CD4-positive, alpha-beta T cell (primary cell): ENCODE measurements at regions of chr9 and their contacts with region 1.

Region 1: DNA sequence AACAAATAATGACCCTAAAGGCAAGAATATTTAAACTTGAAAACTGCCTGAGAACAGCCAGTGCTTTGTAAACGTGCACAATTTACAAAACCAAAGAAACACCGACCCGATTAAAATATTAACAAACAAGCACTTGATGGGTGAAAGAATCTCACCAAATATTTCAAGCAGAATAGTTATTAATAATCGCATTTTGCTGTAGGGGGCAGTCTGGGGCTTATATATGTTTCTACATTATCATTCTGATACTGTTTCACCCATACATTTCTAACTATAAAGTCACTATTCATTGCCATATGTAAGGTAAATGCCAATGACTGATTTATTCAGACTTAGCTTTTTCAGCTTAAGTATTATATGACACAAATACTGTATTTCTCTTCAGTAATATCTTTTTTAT is 37.7 kb downstream of the UBAP2 start:
- DNase-seq: peak in 4 of 14 experiments; percentile 15 to 43 (median 40)
- ATAC-seq: peak; percentile 48
- H3K4me3 ChIP-seq: no peak overlapping the region
- H3K4me3 Mint-ChIP-seq: no peak overlapping the region
- H3K27ac ChIP-seq: no peak overlapping the region
- H3K27ac Mint-ChIP-seq: no peak overlapping the region
- H3K4me1 ChIP-seq: no peaks in the 10 kb centered on the region
- H3K4me1 Mint-ChIP-seq: no peaks in the 10 kb centered on the region
- H3K27me3 ChIP-seq: no peaks in the 10 kb centered on the region
- H3K27me3 Mint-ChIP-seq: no peaks in the 10 kb centered on the region
- CTCF ChIP-seq: peak; percentile 46

Region 2: GRCh38 chr9:33893861-33894260 is 117.1 kb before region 1 on chr9:
- CTCF ChIA-PET with region 1: no interaction called
- POLR2A ChIA-PET with region 1: no interaction called
- intact Hi-C with region 1: no loop called
- DNase-seq: no peak
- ATAC-seq: no peak
- H3K4me3 ChIP-seq: no peak overlapping the region
- H3K4me3 Mint-ChIP-seq: no peak overlapping the region
- H3K27ac ChIP-seq: no peak overlapping the region
- H3K27ac Mint-ChIP-seq: no peak overlapping the region
- H3K4me1 ChIP-seq: no peaks in the 10 kb centered on the region
- H3K4me1 Mint-ChIP-seq: peaks cover 7% of the 10 kb centered on the region
- H3K27me3 ChIP-seq: no peaks in the 10 kb centered on the region
- H3K27me3 Mint-ChIP-seq: no peaks in the 10 kb centered on the region
- CTCF ChIP-seq: no peak

Region 3: GRCh38 chr9:34072868-34073590 is 62.0 kb after region 1 on chr9:
- CTCF ChIA-PET with region 1: interaction called, 3 read pairs
- POLR2A ChIA-PET with region 1: no interaction called
- intact Hi-C with region 1: loop called (anchors 5 to 10 kb)
- DNase-seq: no peak
- ATAC-seq: no peak
- H3K4me3 ChIP-seq: no peak overlapping the region
- H3K4me3 Mint-ChIP-seq: no peak overlapping the region
- H3K27ac ChIP-seq: no peak overlapping the region
- H3K27ac Mint-ChIP-seq: no peak overlapping the region
- H3K4me1 ChIP-seq: peaks cover 3% of the 10 kb centered on the region
- H3K4me1 Mint-ChIP-seq: no peaks in the 10 kb centered on the region
- H3K27me3 ChIP-seq: no peaks in the 10 kb centered on the region
- H3K27me3 Mint-ChIP-seq: no peaks in the 10 kb centered on the region
- CTCF ChIP-seq: no peak

Region 4: GRCh38 chr9:34158362-34158869 is 147.4 kb after region 1 on chr9:
- CTCF ChIA-PET with region 1: no interaction called
- POLR2A ChIA-PET with region 1: no interaction called
- intact Hi-C with region 1: loop called in 1 of 2 experiments (anchors 5 kb)
- DNase-seq: no peak
- ATAC-seq: no peak
- H3K4me3 ChIP-seq: no peak overlapping the region
- H3K4me3 Mint-ChIP-seq: no peak overlapping the region
- H3K27ac ChIP-seq: no peak overlapping the region
- H3K27ac Mint-ChIP-seq: no peak overlapping the region
- H3K4me1 ChIP-seq: no peaks in the 10 kb centered on the region
- H3K4me1 Mint-ChIP-seq: no peaks in the 10 kb centered on the region
- H3K27me3 ChIP-seq: no peaks in the 10 kb centered on the region
- H3K27me3 Mint-ChIP-seq: no peaks in the 10 kb centered on the region
- CTCF ChIP-seq: no peak

Region 5: GRCh38 chr9:34222451-34222850 is 211.5 kb after region 1 on chr9:
- CTCF ChIA-PET with region 1: no interaction called
- POLR2A ChIA-PET with region 1: no interaction called
- intact Hi-C with region 1: no loop called
- DNase-seq: no peak
- ATAC-seq: no peak
- H3K4me3 ChIP-seq: no peak overlapping the region
- H3K4me3 Mint-ChIP-seq: no peak overlapping the region
- H3K27ac ChIP-seq: no peak overlapping the region
- H3K27ac Mint-ChIP-seq: no peak overlapping the region
- H3K4me1 ChIP-seq: peaks cover 3% of the 10 kb centered on the region
- H3K4me1 Mint-ChIP-seq: peaks cover 22% of the 10 kb centered on the region
- H3K27me3 ChIP-seq: no peaks in the 10 kb centered on the region
- H3K27me3 Mint-ChIP-seq: no peaks in the 10 kb centered on the region
- CTCF ChIP-seq: no peak